Psoas muscle (tissue), 8 donors: ENCODE measurements at regions of chr1 and their contacts with region 1.

Region 1: GRCh38 chr1:161225534-161226319 is at the start of gene TOMM40L:
- DNase-seq: peak; percentile 89 to 95
- ATAC-seq: peak; percentile 95 to 98 (median 96)
- H3K4me3 ChIP-seq: peak within 1 kb of the TSS; percentile 85
- H3K27ac ChIP-seq: peak within 1 kb of the TSS; percentile 77
- H3K4me1 ChIP-seq: peaks cover 12% of the 10 kb centered on the region
- H3K27me3 ChIP-seq: no peaks in the 10 kb centered on the region
- CTCF ChIP-seq: peak; percentile 58
- total RNA-seq, gene TOMM40L: 10.0 to 39.2 (median 27.5) TPM

Region 2: DNA sequence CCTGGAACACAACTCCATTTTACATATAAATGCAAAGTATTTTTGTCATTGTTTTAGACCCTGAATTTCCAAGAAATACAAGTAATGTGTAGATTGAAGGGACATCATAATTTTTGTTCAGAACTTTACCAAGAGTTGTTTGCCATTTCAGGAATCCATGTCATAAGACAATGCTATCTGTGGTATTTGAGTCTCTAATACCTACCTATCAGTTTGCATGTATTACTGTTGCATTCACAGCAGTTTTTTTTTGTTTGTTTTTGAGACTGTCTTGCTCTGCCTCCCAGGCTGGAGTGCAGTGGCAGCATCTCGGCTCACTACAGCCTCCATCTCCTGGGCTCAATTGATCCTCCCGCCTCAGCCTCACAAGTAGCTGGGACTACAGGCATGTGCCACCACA is 66.9 kb after region 1 on chr1:
- intact Hi-C with region 1: loop called (anchors 5 kb)
- DNase-seq: no peak
- ATAC-seq: no peak
- H3K4me3 ChIP-seq: no peak overlapping the region
- H3K27ac ChIP-seq: no peak overlapping the region
- H3K4me1 ChIP-seq: no peaks in the 10 kb centered on the region
- H3K27me3 ChIP-seq: no peaks in the 10 kb centered on the region
- CTCF ChIP-seq: no peak

Region 3: DNA sequence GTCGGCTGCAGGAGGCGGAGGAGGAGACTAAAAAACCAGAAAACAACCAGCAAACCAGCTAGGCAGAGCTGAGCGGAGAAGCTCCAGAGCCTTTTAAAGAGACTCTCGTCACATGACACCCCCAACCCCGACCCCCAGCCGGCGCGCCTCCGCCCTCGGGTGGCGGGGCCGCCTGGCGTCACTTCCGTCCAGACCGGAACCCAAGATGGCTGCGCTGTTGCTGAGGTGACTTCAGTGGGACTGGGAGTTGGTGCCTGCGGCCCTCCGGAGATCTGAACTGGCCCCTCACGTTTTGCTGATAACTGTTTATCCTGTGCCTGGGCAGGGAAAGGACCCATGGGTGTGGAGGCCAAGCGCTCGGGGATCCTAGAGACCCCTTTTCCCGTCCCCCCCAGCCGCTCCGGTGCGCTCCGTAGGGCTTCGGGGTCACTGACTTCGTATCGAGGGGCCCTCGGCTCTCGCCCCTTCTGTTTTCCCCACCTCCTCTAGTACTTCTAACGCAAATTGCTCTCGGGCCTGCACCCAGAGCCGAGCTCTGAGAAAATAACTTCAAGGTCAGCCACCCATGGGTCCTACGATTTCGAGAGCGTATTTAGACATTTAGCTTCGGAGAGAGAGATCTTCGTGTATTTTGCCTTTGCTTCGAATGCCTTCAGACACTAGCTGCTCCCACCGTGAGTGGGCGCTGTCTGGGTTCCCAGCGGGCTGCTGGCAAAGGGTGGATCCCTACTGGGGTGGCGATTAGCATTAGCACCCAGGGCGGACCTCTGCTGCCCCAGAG is 88.7 kb after region 1 on chr1 and contains the start of gene SDHC:
- intact Hi-C with region 1: loop called in 1 of 2 experiments (anchors 5 kb)
- DNase-seq: peak; percentile 90 to 94
- ATAC-seq: peak; percentile 99 to 100 (median 99)
- H3K4me3 ChIP-seq: peak within 1 kb of the TSS; percentile 89
- H3K27ac ChIP-seq: peak within 1 kb of the TSS; percentile 96
- H3K4me1 ChIP-seq: peaks cover 23% of the 10 kb centered on the region
- H3K27me3 ChIP-seq: no peaks in the 10 kb centered on the region
- CTCF ChIP-seq: peak; percentile 12
- total RNA-seq, gene SDHC: 230 to 354 (median 261) TPM

Region 4: GRCh38 chr1:161342821-161343220 is 117.1 kb after region 1 on chr1:
- intact Hi-C with region 1: no loop called
- DNase-seq: no peak
- ATAC-seq: no peak
- H3K4me3 ChIP-seq: no peak overlapping the region
- H3K27ac ChIP-seq: no peak overlapping the region
- H3K4me1 ChIP-seq: no peaks in the 10 kb centered on the region
- H3K27me3 ChIP-seq: no peaks in the 10 kb centered on the region
- CTCF ChIP-seq: no peak

Region 5: GRCh38 chr1:162276493-162276892 is 1050.8 kb after region 1 on chr1:
- intact Hi-C with region 1: no loop called
- DNase-seq: no peak
- ATAC-seq: no peak
- H3K4me3 ChIP-seq: no peak overlapping the region
- H3K27ac ChIP-seq: no peak overlapping the region
- H3K4me1 ChIP-seq: no peaks in the 10 kb centered on the region
- H3K27me3 ChIP-seq: no peaks in the 10 kb centered on the region
- CTCF ChIP-seq: peak; percentile 36